Activated CD4-positive, alpha-beta T cell treated with anti-CD3 and anti-CD28 coated beads, Interleukin-2, amount 10 ng/mL, durations not matched to agents 24 days and 14 days (primary cell): ENCODE measurements at regions of chr5 and their contacts with region 1.

Region 1: DNA sequence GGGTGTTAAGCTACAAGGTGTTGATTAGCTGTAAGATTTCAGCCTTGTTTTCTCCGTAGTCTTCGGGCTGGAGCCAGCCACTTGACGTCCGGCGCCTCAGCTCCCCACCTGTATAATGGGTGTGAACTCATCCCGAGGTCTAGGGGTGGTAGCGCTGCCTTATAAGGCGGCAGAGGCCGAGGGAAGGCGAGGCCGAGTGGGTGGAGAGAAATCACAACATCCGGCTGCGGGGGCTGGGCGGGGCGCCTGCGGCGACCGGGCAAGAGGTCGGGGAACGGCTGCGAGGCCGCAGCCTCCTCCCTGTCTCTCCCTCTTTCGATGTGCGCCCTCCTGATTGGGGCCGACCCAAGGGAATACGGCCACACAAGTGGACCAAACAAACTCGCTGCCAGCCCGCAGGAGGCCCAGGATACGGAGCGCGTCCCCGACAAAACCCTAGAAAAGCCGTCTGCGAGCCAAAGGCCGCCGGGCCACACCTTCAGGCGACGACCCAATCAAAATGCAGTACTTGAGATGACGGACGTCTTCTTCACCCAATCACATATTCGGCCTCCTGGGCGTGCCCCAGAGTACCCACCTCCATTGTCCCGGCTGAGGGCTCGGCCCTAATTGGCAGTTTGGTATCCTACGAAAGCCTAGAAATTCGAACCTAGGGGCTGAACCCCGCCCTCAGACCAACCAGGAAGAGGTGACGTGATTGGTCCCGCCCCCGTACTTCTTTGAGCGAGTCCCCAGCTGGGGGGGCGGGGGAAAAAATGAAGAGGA is 493 bp upstream of the GRK6 start:
- DNase-seq: peak; percentile 100
- H3K4me3 Mint-ChIP-seq: peak overlapping the region; percentile 93
- H3K27ac Mint-ChIP-seq: peak overlapping the region; percentile 98
- H3K4me1 Mint-ChIP-seq: peaks cover 52% of the 10 kb centered on the region
- H3K27me3 Mint-ChIP-seq: no peaks in the 10 kb centered on the region

Region 2: DNA sequence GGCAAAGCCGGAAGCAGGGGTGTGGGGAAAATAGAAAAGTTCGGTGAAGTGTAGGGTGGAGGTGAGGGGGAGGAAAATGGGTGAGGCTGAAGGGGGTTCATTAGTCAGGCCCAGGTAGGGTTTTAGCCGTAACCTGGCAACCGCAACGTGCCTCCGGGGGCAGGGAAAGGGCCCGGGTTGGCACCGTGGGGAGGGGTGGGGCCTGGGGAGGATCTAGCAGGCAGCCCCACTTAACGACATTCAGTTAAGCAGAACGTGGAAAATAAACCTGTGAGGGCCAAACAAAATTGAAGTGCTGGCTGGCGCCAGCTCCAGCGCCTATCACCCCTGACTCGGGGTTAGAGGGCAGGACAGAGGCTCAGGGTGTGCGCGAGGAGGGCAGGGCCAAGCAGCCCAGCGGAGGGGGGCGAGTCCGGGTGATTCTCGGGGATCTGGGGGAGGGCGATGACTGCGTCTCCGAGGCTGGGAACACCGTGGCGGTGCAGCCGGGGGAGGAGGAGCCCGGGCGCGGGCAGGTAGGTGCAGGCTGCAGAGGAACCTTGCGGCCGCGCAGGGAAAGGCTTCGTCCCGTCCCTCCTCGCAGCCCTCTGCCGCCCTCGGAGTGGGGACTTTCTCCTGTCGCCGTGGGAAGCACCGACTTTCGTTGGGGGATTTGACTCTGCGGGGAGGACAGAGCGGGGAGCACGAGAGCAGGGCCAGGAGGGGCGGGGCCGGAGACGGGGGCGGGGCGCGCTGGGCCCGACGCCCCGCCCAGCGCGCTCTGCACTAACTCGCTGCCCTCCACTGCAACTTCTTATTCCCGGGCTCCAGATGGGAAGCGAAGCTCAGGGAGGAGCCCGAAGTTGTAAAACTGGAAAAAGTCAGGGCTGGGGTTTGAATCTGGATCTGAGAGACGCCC is 63.1 kb before region 1 on chr5:
- intact Hi-C with region 1: loop called (anchors 2 kb)
- DNase-seq: peak; percentile 87
- H3K4me3 Mint-ChIP-seq: peak overlapping the region; percentile 81
- H3K27ac Mint-ChIP-seq: peak overlapping the region; percentile 72
- H3K4me1 Mint-ChIP-seq: peaks cover 59% of the 10 kb centered on the region
- H3K27me3 Mint-ChIP-seq: no peaks in the 10 kb centered on the region

Region 3: GRCh38 chr5:177403792-177404640 is 22.0 kb before region 1 on chr5:
- intact Hi-C with region 1: loop called (anchors 1 kb)
- DNase-seq: peak; percentile 95
- H3K4me3 Mint-ChIP-seq: peak overlapping the region; percentile 88
- H3K27ac Mint-ChIP-seq: peak overlapping the region; percentile 67
- H3K4me1 Mint-ChIP-seq: peaks cover 17% of the 10 kb centered on the region
- H3K27me3 Mint-ChIP-seq: peaks cover 33% of the 10 kb centered on the region

Region 4: GRCh38 chr5:177454397-177455035 is 28.5 kb after region 1 on chr5:
- intact Hi-C with region 1: loop called (anchors 1 kb)
- DNase-seq: peak; percentile 98
- H3K4me3 Mint-ChIP-seq: peak overlapping the region; percentile 85
- H3K27ac Mint-ChIP-seq: no peak overlapping the region
- H3K4me1 Mint-ChIP-seq: peaks cover 10% of the 10 kb centered on the region
- H3K27me3 Mint-ChIP-seq: peaks cover 18% of the 10 kb centered on the region